Aorta (tissue), 5 donors: ENCODE measurements at regions of chr15 and their contacts with region 1.

Region 1: GRCh38 chr15:80274996-80275395 is 23.0 kb upstream of the CTXND1 start:
- DNase-seq: no peak
- ATAC-seq: no peak
- H3K4me3 ChIP-seq: no peak overlapping the region
- H3K27ac ChIP-seq: no peak overlapping the region
- H3K4me1 ChIP-seq: no peaks in the 10 kb centered on the region
- H3K27me3 ChIP-seq: no peaks in the 10 kb centered on the region

Region 2: DNA sequence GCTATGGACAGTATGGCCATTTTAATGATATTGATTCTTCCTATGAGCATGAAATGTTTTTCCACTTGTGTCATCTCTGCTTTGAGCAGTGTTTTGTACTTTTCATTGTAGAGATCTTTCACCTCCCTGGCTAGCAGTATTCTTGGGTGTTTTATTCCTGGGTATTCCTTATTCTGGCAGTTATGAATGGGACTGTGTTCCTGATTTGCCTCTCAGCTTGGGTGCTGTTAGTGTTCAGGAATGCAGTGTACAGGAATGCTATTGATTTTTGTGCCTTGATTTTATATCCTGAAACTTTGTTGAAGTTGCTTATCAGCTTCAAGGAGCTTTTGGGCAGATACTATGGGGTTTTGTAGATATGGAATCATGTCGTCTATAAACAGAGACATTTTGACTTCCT is 26.5 kb after region 1 on chr15:
- intact Hi-C with region 1: loop called in 1 of 2 experiments (anchors 1 kb)
- DNase-seq: no peak
- ATAC-seq: no peak
- H3K4me3 ChIP-seq: no peak overlapping the region
- H3K27ac ChIP-seq: no peak overlapping the region
- H3K4me1 ChIP-seq: no peaks in the 10 kb centered on the region
- H3K27me3 ChIP-seq: no peaks in the 10 kb centered on the region